Dorsolateral prefrontal cortex (tissue), 120 donors: ENCODE measurements at regions of chr21 and their contacts with region 1.

Region 1: DNA sequence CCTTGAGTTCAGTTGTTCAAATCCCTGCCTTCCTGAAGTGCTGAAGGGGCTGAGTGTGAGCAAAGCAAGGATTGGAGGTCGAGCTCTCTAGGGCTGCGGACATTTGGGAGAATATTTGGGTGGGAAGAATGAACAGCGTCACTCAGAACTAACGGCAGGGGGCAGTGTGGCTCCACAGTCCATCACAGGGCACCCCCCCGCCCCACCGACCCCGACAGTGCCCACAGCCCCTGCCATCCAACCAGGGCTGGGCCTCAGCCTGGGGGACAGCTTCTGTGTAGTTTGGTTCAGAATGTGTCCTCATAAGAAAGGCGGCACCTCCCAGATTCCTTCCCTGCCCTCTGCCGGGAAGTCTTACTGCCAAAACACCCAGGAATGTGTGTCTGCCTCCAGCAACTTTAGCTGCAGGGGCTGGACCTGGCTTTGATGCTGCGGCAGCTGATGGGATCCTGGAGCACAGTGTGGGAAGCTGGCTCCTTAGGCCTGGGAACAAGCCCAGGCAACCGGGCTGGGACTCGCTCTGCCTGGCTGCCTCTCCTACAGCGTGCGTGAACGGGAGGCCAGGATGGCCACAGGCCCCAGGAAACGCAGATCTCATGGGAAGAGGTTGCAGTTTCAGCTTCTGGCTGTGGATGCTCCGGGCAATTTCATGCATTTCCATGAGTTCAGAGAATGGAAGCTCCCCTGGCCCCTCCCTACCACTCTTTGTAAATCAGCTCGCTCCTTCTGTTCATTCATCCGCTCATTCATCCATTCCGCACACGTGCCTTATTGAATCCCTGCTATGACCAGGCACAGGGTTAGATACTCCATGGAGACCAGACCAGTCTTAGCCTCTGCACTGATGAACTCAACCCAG is 104.9 kb upstream of the TMPRSS2 start:
- DNase-seq: peak in 9 of 10 donors; percentile 16 to 69 (median 54)
- H3K4me3 ChIP-seq: peak overlapping the region in 16 of 59 donors; percentile 0 to 39 (median 14)
- H3K27ac ChIP-seq: peak overlapping the region in 21 of 59 donors; percentile 2 to 58 (median 17)
- H3K27me3 ChIP-seq: peaks cover 0 to 9% (median 0%) of the 10 kb centered on the region in 45 donors
- CTCF ChIP-seq: peak; percentile 65 to 94 (median 84)

Region 2: DNA sequence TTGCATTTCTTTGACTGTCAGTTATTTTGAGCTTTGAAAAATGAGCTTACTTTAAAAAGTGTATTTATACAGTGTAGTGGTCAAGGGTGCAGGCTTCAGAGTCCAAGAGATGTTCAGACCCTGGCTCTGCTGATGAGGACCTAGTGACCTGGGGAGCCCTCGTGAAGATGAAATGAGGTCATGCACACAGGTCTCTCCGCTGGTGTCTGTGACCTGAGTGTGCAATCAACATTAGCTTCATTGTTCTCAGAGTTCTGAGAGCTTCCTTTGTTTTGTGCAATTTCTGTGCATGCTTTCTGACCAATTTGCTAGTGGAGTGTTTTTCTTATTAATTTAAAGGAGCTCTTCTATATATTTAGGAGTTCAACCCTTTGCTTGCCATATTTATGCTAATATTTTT is 82.6 kb after region 1 on chr21:
- intact Hi-C with region 1: loop called (anchors 2 to 10 kb)
- DNase-seq: no peak
- H3K4me3 ChIP-seq: no peak overlapping the region
- H3K27ac ChIP-seq: no peak overlapping the region
- H3K27me3 ChIP-seq: no peaks in the 10 kb centered on the region
- CTCF ChIP-seq: no peak

Region 3: GRCh38 chr21:41761211-41762181 is 148.6 kb after region 1 on chr21:
- intact Hi-C with region 1: no loop called
- DNase-seq: no peak
- H3K4me3 ChIP-seq: peak overlapping the region in 12 of 59 donors; percentile 2 to 32 (median 14)
- H3K27ac ChIP-seq: no peak overlapping the region
- H3K27me3 ChIP-seq: peaks cover 4 to 80% (median 61%) of the 10 kb centered on the region in 45 donors
- CTCF ChIP-seq: no peak

Region 4: GRCh38 chr21:41777951-41778874 is 165.3 kb after region 1 on chr21:
- intact Hi-C with region 1: loop called (anchors 2 to 5 kb)
- DNase-seq: peak; percentile 53 to 88 (median 82)
- H3K4me3 ChIP-seq: peak overlapping the region in 10 of 59 donors; percentile 0 to 44 (median 26)
- H3K27ac ChIP-seq: peak overlapping the region in 2 of 59 donors; percentile 6 to 13
- H3K27me3 ChIP-seq: peaks cover 0 to 65% (median 29%) of the 10 kb centered on the region in 45 donors
- CTCF ChIP-seq: peak; percentile 60 to 96 (median 90)